ENCODE measurements at regions of chr12 and their contacts with region 1.

Region 1: DNA sequence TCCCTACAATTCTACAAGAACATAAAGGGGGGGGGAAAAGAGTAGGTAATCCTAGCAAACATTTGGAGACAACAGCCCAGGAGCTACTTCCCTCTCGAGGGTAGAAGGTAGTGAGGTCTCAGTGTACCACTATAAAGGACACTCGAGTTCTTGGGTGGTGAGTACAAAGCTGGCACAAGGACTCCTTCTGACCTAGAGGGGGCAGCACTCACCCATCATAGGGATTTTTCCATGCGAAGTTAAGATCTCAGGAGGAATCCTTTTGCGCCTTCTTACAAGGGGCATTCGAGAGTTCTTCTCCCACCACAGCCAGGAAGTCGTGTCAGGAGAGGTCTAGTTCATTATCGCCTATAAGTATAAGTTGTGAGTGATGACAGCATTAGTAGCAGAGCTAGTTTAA is 200.2 kb upstream of the RBM19 start:
- DNase-seq: peak; percentile 60
- ATAC-seq: peak; percentile 75
- H3K4me3 ChIP-seq: no peak overlapping the region
- H3K27ac ChIP-seq: no peak overlapping the region
- H3K4me1 ChIP-seq: no peaks in the 10 kb centered on the region
- H3K27me3 ChIP-seq: no peaks in the 10 kb centered on the region; the same call in 1 of the 2 replicates
- CTCF ChIP-seq: peak; percentile 62
- POLR2A ChIP-seq: no peak
- RAD21 ChIP-seq: peak; percentile 74

Region 2: DNA sequence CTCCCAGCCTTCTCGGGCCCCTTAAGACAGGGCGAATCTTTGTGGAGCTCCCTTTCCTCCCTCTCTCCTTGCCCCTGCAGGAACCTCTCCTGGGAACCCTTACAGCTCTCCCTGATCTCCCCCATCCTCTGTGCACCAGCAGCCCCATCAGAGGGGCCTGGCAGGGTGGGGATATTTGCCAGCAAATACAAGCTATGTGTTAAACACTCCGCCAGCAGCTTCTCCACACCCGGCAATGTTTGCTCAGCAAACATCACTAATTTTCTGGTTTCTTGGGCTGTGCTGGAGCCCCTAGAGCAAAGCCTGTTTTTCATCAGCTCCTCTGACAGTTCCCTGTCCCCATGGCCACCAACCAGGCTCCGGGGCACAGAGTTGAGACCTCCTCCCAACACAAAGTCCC is 547.2 kb before region 1 on chr12:
- CTCF ChIA-PET with region 1: no interaction called
- POLR2A ChIA-PET with region 1: no interaction called
- dilution Hi-C with region 1: no loop called
- in situ Hi-C with region 1: no loop called
- intact Hi-C with region 1: no loop called
- DNase-seq: no peak
- ATAC-seq: no peak
- H3K4me3 ChIP-seq: no peak overlapping the region
- H3K27ac ChIP-seq: no peak overlapping the region
- H3K4me1 ChIP-seq: no peaks in the 10 kb centered on the region
- H3K27me3 ChIP-seq: no peaks in the 10 kb centered on the region
- CTCF ChIP-seq: no peak
- POLR2A ChIP-seq: no peak
- RAD21 ChIP-seq: no peak

Region 3: DNA sequence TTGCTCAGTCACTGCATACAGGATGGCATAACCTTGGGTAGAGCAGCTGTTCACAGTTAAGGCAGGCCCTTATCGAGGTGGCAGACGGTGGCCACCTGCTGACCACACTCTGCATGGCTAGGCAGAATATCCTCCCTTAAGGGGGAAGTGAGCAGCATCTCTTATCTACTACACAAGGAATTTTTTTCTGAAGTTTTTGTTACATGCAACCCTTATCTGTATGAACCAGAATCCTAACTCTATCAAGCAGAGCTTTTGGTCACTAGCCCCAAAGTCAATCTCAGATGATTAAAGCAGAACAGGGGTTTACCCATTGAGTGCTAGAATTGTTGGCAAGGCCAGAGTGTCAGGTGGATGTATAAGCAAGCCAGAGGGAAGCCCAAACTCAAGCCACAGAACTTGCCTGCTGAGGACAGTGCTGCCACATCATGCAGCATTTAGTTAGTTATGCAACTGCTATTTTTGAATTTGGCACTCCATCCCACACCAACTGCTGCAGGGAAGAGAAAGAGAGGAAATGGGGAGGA is 46.8 kb after region 1 on chr12:
- CTCF ChIA-PET with region 1: no interaction called
- POLR2A ChIA-PET with region 1: no interaction called
- dilution Hi-C with region 1: no loop called
- in situ Hi-C with region 1: no loop called
- intact Hi-C with region 1: no loop called
- DNase-seq: no peak
- ATAC-seq: no peak
- H3K4me3 ChIP-seq: no peak overlapping the region
- H3K27ac ChIP-seq: no peak overlapping the region
- H3K4me1 ChIP-seq: no peaks in the 10 kb centered on the region
- H3K27me3 ChIP-seq: peaks cover 4% of the 10 kb centered on the region
- CTCF ChIP-seq: no peak
- POLR2A ChIP-seq: no peak
- RAD21 ChIP-seq: no peak

Region 4: GRCh38 chr12:114508529-114509129 is 342.3 kb after region 1 on chr12:
- CTCF ChIA-PET with region 1: interaction called, 15 read pairs
- POLR2A ChIA-PET with region 1: no interaction called
- dilution Hi-C with region 1: no loop called
- in situ Hi-C with region 1: loop called (anchors 25 kb)
- intact Hi-C with region 1: loop called (anchors 1 kb)
- DNase-seq: peak; percentile 79
- ATAC-seq: peak; percentile 80
- H3K4me3 ChIP-seq: no peak overlapping the region
- H3K27ac ChIP-seq: no peak overlapping the region
- H3K4me1 ChIP-seq: peaks cover 5% of the 10 kb centered on the region
- H3K27me3 ChIP-seq: no peaks in the 10 kb centered on the region; the same call in 1 of the 2 replicates
- CTCF ChIP-seq: peak; percentile 87
- POLR2A ChIP-seq: no peak
- RAD21 ChIP-seq: peak; percentile 89

Region 5: DNA sequence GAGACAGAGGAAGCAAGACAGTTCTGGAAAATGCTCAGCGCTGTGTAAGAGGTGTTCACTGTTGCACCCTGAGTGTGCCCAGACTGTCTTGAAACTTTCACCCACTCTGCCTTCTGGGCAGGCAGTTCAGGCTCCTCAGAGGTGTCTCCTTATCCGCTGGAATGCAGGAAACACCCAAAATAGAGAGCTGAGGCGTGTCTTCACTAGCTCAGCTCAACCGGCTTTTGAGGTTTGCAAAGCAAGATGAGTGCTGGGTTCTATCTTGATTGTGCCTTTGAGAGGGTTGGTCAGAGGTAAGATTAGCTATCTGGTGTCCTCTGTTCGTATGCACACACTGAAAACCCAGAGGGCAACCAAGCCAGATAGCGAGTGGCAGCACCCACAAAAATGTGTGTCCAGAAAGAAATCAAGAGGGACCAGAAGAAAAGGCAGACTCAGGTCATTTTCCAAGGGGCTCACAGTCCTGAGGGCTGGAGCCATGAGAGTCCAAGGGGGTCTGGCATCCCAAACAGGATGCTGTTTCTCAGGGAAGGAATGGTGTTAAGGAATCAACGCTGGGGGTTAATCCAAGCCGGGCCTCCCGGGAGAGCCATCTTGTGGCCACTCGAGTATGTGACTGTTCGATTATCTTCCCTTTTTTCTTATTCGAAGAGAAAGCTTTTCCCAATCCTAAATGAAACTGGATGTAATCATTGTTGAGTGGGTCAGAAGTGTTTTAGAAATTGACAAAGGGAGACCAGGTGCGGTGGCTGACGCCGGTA is 470.5 kb after region 1 on chr12:
- CTCF ChIA-PET with region 1: no interaction called
- POLR2A ChIA-PET with region 1: no interaction called
- dilution Hi-C with region 1: no loop called
- in situ Hi-C with region 1: no loop called
- intact Hi-C with region 1: loop called (anchors 5 kb)
- DNase-seq: peak; percentile 19
- ATAC-seq: peak; percentile 84
- H3K4me3 ChIP-seq: no peak overlapping the region
- H3K27ac ChIP-seq: no peak overlapping the region
- H3K4me1 ChIP-seq: no peaks in the 10 kb centered on the region
- H3K27me3 ChIP-seq: peaks cover 1% of the 10 kb centered on the region; the same call in 1 of the 2 replicates
- CTCF ChIP-seq: peak; percentile 58
- POLR2A ChIP-seq: no peak
- RAD21 ChIP-seq: peak; percentile 41; the same call in 1 of the 2 replicates

Region 6: DNA sequence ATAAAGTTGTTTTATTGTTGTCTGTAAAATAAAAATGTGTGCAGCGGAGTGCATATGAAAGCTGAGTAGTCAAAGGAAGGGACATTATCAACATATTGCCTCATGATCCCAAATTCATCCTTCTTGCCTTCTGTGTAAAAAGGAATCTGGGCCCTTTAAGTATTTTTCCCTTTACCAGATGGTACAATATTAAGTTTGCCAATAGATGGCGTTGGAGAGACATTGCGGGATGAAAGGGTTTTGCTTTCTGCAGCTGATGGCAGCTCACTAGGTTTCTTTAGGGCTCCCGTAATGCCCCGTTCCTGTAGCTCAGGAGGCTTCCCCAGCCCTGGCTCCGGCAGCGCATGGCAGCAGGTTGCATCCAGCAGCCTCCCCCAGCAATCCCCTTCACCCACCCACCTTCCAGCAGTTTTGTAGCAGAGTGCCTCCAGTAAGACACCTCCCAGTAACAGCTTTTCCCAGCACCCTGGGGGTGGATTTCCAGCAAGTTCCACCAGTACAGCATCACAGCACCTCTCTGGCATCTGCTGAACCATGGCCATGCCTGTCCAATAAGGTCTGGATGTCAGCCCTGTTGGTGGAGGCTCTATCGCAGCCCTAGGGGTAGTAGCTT is 1756.7 kb after region 1 on chr12:
- CTCF ChIA-PET with region 1: no interaction called
- POLR2A ChIA-PET with region 1: no interaction called
- dilution Hi-C with region 1: no loop called
- in situ Hi-C with region 1: no loop called
- intact Hi-C with region 1: loop called (anchors 5 kb)
- DNase-seq: no peak
- ATAC-seq: no peak
- H3K4me3 ChIP-seq: no peak overlapping the region
- H3K27ac ChIP-seq: no peak overlapping the region
- H3K4me1 ChIP-seq: peaks cover 3% of the 10 kb centered on the region
- H3K27me3 ChIP-seq: peaks cover 15% of the 10 kb centered on the region
- CTCF ChIP-seq: peak; percentile 28; the same call in 1 of the 2 replicates
- POLR2A ChIP-seq: no peak
- RAD21 ChIP-seq: 0 out of 2 replicates have a peak, but pooled peaks have one; percentile 23